SK-N-SH (cell line): ENCODE measurements at regions of chr9 and their contacts with region 1.

Region 1: DNA sequence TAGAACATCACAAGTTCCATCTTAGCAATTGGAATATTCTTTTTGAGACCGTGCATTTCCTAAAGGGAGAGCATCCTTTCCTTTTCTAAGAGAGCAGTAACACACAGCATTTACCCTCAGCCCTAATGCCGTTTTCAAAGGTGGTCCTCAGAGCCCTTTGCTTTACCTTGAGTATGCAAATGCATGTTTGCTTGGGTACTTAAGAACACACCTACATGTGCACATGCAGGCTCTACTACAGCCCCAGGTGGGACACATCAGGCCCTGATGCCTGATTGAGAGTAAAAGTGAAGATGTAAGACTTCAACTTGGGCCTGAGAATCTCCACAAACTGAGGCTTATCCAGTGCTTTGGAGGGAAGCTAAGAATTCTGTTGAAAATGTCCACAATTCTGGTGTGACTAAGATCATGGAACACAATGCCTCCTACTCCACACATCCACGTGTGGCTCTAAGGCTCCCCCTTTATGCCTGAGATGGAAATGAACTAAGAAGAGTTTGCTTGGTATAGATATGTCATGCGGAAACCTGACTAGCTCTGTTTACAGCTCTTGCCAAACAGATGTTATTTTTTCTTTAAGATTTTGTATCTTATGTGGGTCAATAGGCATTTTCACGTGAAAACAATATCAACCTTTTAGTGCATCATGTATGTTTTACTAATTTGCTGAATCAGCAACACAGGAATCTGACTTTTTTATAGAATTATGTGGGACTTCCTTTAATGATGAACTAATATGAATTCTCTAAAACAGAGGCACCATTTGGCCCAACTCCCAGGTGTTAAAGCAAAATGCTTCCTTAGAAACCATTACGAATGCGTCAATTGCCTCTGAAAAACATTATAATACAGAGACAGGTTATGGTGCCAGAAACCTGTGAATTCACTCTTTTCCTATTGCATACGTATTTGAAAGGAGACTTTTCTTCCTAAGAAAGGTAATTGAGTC is 48.9 kb upstream of the SLC2A8 start:
- DNase-seq: peak; percentile 55
- H3K4me3 ChIP-seq: no peak overlapping the region
- H3K27ac ChIP-seq: no peak overlapping the region
- H3K4me1 ChIP-seq: peaks cover 0 to 5% of the 10 kb centered on the region in 2 experiments; a peak in 2 of 4 replicates
- H3K27me3 ChIP-seq: no peaks in the 10 kb centered on the region
- CTCF ChIP-seq: peak; percentile 68
- EP300 ChIP-seq: no peak
- RAD21 ChIP-seq: peak; percentile 85

Region 2: DNA sequence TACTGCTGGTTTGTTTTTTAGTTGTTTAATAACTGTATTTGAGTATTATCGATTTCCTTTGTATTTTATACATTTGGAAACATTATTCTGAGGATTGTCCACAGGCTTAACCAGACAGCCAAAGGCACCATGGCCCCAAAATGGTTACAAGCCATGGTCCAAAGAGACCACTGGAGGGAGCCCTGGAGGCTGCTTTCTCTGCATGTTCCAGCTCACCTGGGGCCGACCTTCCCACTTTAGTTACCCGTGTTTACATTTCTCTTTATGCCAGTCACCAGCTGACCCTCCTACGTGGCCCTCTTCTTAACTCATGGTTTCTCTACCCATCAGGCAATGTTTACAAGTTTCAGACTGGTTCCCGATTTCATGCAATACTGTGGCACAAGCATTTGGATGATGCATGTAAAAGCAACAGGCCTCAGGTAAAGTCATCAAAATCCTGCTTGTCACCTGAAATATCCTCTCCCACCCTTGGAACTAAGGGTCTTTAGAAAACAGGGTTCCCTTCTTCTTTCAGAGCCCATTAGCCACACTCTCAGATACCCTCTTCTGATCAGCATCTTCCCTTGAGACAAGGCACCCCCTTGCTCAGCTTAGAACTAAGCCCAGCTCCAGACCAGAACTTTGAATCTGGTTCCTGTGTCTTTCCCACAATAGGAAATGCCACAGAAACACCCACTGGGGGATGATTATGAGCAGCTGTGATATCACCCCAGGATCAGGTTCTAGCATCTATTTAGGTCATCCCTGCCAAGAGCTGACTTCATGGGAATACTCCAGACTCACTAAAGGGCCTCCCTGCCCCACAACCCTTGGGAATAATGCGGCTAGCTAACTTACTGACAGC is 133.5 kb before region 1 on chr9:
- CTCF ChIA-PET with region 1: interaction called, 30 read pairs
- POLR2A ChIA-PET with region 1: no interaction called
- DNase-seq: peak; percentile 82
- H3K4me3 ChIP-seq: no peak overlapping the region; a peak in 1 of 4 replicates
- H3K27ac ChIP-seq: no peak overlapping the region
- H3K4me1 ChIP-seq: peaks cover 0 to 5% of the 10 kb centered on the region in 2 experiments; a peak in 1 of 4 replicates
- H3K27me3 ChIP-seq: no peaks in the 10 kb centered on the region
- CTCF ChIP-seq: peak; percentile 85
- EP300 ChIP-seq: no peak
- RAD21 ChIP-seq: peak; percentile 83

Region 3: DNA sequence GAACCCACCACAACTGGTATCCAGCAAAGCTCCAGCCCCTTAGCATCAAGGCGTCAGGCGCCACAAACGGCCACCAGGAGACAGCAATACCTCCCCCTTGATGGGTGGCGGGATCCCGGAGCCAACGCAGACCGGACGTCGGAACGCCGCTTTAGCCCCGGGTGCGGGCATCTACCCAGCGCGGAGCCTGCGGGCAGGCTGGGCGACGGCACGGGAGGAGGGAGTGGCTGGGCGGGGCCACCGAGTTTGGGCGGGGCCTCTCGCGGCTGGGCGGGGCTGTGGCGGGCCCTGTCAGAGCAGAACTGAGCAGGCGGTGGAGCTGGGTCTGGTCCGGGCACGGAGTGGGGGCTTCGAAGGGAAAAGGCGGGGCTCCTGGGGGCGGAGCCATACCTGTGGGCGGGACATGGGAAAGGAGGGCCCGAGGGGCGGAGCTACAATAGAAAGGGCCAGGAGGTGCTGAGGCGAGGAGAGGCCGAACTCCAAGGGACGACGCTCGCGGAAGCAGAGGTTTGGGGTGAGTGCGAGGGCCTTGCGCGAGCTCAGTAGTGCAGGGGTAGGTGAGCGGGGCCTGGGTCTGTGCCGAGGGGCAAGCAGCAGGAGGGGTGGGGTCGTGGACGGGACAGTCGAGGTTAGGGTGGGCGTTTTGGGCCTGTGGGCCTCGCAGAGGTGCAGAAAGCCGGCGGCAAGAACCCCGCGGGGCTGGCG is 123.8 kb before region 1 on chr9:
- CTCF ChIA-PET with region 1: interaction called, 17 read pairs
- POLR2A ChIA-PET with region 1: no interaction called
- DNase-seq: peak; percentile 99
- H3K4me3 ChIP-seq: peak overlapping the region; percentile 67 to 70
- H3K27ac ChIP-seq: peak overlapping the region; percentile 59 to 89; a peak in 3 of 4 replicates
- H3K4me1 ChIP-seq: peaks cover 7 to 16% of the 10 kb centered on the region in 2 experiments; a peak in 3 of 4 replicates
- H3K27me3 ChIP-seq: no peaks in the 10 kb centered on the region
- CTCF ChIP-seq: peak; percentile 38; the same call in 1 of the 2 replicates
- EP300 ChIP-seq: no peak
- RAD21 ChIP-seq: peak; percentile 55

Region 4: GRCh38 chr9:127333221-127334064 is 14.7 kb before region 1 on chr9:
- CTCF ChIA-PET with region 1: interaction called, 14 read pairs
- POLR2A ChIA-PET with region 1: no interaction called
- DNase-seq: no peak
- H3K4me3 ChIP-seq: no peak overlapping the region
- H3K27ac ChIP-seq: no peak overlapping the region; a peak in 1 of 4 replicates
- H3K4me1 ChIP-seq: peaks cover 15 to 19% of the 10 kb centered on the region in 2 experiments
- H3K27me3 ChIP-seq: no peaks in the 10 kb centered on the region
- CTCF ChIP-seq: no peak
- EP300 ChIP-seq: no peak
- RAD21 ChIP-seq: no peak

Region 5: DNA sequence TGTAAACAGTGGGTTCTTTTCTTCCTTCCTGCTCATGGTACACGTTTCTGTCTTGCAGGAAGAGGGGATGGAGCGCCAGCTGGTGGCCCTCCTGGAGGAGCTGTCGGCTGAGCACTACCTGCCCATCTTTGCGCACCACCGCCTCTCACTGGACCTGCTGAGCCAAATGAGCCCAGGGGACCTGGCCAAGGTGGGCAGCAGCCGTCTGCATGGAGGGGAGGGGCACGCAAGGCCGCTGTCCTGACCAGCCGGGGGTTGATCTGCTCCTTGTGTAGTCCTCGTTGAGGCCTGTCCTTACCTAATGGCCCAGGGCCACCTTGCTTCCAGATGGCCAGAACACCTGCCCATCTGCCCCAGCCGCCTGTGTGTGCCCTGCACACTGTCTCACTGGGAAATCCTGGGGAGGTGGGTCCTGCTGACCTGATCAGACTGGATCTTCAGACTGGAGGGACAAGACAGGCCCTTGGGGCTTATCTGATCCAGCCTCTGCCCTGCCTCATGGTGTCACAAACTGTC is 147.9 kb after region 1 on chr9:
- CTCF ChIA-PET with region 1: no interaction called
- POLR2A ChIA-PET with region 1: no interaction called
- DNase-seq: no peak
- H3K4me3 ChIP-seq: no peak overlapping the region
- H3K27ac ChIP-seq: peak overlapping the region; percentile 68 to 75
- H3K4me1 ChIP-seq: peaks cover 11 to 26% of the 10 kb centered on the region in 2 experiments; a peak in 2 of 4 replicates
- H3K27me3 ChIP-seq: no peaks in the 10 kb centered on the region
- CTCF ChIP-seq: no peak
- EP300 ChIP-seq: no peak
- RAD21 ChIP-seq: peak; percentile 11; the same call in 1 of the 2 replicates